Left ventricle myocardium inferior (tissue), 1 donor: ENCODE measurements at regions of chr9 and their contacts with region 1.

Region 1: DNA sequence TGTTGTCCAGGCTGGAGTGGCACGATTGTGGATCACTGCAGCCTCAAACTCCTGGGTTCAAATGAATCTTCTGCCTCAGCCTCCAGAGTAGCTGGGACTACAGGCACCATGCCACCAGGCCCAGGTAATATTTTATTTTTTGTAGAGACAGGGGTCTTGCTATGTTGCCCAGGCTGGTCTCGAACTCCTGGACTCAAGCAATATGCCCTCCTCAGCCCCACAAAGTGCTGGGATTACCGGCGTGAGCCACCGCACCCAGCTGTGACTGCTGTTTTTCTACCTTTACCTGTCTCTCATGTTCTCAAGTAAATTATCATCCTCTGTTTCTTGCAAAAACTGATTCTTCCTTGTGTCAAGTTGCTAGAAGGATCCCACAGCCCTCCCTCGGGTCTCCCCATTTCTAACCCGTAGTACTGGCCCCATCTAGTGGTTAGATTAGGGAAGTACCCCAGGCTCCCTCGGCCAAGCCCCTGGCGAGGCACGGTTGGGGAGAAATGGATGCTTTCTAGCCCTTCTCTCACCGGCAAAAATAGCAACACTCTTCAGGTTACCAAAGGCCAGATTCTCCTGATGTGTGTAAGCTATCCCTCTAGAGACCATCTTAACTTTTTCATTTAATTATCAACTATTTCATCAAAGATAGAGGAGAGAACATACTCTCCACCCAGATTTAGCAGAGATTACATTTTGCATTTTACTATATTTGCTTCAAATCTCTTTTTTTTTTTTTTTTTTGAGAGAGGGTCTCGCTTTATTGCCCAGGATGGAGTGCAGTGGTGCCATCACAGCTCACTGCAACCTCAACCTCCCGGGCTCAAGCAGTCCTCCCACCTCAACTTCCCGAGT is 19.2 kb upstream of the TOR1B start:
- DNase-seq: peak; percentile 36
- H3K4me3 ChIP-seq: no peak overlapping the region
- H3K27ac ChIP-seq: no peak overlapping the region
- H3K4me1 ChIP-seq: no peaks in the 10 kb centered on the region
- H3K27me3 ChIP-seq: peaks cover 21% of the 10 kb centered on the region
- CTCF ChIP-seq: peak; percentile 94

Region 2: DNA sequence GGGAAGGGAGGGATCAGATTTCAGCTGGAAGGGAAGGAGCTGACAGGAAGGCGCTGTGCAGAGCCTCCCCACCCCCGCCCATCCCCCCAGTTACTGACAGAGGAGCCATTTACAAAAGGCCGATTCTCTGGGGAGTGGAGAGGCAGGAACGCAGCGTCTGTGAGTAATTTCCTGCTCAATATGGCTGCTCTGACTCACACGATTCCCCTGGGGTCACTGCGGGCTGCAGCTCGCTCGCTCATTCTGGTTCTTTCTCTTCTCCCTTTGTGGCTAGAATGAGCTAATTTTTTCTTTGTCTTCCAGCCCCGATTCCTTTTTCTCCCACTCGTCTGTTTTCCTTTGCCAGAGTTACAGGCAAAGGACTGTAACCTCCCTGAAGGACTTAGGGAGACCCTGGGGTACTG is 643.7 kb before region 1 on chr9:
- intact Hi-C with region 1: loop called (anchors 10 kb)
- DNase-seq: peak; percentile 95
- H3K4me3 ChIP-seq: peak overlapping the region; percentile 71
- H3K27ac ChIP-seq: peak overlapping the region; percentile 100
- H3K4me1 ChIP-seq: peaks cover 78% of the 10 kb centered on the region
- H3K27me3 ChIP-seq: no peaks in the 10 kb centered on the region
- CTCF ChIP-seq: no peak

Region 3: DNA sequence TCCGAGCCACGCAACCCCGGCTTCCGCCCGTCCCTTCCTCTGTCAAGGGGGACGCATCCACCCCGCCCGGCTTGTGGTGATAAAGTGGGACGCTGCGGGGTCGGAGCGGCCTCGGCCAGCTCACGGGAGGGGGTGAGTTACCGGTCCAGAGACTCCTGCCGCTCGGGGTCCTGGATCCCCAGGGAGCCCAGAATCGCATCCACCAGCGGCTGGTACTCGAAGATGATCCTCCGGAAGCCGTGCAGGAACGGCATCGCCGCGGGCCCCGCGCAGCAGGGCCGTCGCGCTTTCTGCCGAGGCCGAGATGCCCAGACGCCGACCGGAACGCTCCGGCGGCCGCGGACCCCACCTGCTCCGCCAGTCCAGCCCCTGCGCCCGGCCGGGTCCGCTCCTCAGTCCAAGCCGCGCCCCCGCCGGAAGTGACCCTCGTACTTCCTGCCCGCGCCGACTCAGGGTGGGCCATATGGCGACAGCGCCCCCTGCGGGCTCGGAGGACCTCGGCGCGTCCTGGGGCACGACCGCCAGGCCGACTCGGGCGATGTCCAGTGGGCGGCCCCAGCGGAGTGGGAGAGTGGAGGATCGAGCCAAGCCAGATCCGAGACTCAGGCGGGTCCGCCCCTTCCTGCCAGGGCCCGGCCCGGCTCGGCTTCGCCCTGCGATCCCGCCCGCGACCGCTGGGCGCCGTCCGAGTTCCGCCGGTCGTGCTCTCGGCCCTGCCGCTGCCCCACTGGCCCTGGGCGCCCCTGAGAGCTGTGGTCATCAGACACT is 141.8 kb before region 1 on chr9 and contains the start of gene ASB6:
- intact Hi-C with region 1: loop called (anchors 10 kb)
- DNase-seq: peak; percentile 98
- H3K4me3 ChIP-seq: peak within 1 kb of the TSS; percentile 99
- H3K27ac ChIP-seq: peak within 1 kb of the TSS; percentile 90
- H3K4me1 ChIP-seq: peaks cover 32% of the 10 kb centered on the region
- H3K27me3 ChIP-seq: no peaks in the 10 kb centered on the region
- CTCF ChIP-seq: peak; percentile 99
- total RNA-seq, gene ASB6: 9.0 TPM

Region 4: GRCh38 chr9:129737479-129738274 is 46.1 kb before region 1 on chr9:
- intact Hi-C with region 1: loop called (anchors 5 kb)
- DNase-seq: peak; percentile 82
- H3K4me3 ChIP-seq: peak overlapping the region; percentile 74
- H3K27ac ChIP-seq: peak overlapping the region; percentile 60
- H3K4me1 ChIP-seq: peaks cover 7% of the 10 kb centered on the region
- H3K27me3 ChIP-seq: peaks cover 19% of the 10 kb centered on the region
- CTCF ChIP-seq: peak; percentile 96